CD14-positive monocyte (primary cell): ENCODE measurements at regions of chr17 and their contacts with region 1.

Region 1: DNA sequence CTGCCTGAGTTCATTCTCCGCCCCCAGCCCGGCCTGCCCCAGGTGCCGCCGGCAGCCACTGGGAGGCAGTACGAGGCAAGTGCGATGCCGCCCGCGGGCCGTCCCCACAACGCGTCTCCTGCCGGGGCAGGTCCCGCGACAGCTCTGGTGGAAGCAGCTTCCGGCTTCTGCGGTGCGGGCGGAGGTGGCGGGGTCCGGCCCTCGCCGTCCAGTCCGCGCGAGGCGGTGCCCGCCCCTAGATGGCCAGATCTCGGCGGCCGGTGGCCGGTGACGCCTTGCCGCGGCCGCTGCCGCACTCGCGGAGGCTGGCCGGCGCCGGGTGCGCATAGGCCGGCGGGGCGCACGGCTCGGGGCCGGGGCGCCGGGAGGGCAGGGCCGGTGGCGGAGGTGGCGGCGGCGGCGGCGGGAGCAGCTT is 1.8 kb downstream of the GJD3 start:
- DNase-seq: peak; percentile 70 to 75 (median 72)
- H3K4me3 ChIP-seq: peak overlapping the region; percentile 36 to 74 (median 42)
- H3K4me3 Mint-ChIP-seq: peak overlapping the region; percentile 78 to 92
- H3K27ac ChIP-seq: no peak overlapping the region
- H3K27ac Mint-ChIP-seq: peak overlapping the region in 1 of 7 donors; percentile 54
- H3K4me1 ChIP-seq: peaks cover 17 to 36% of the 10 kb centered on the region in 2 donors
- H3K4me1 Mint-ChIP-seq: peaks cover 23% of the 10 kb centered on the region
- H3K27me3 ChIP-seq: peaks cover 0 to 35% of the 10 kb centered on the region in 2 donors
- H3K27me3 Mint-ChIP-seq: peaks cover 36 to 45% (median 44%) of the 10 kb centered on the region in 3 donors
- CTCF ChIP-seq: peak; percentile 67

Region 2: GRCh38 chr17:40283662-40284061 is 79.0 kb before region 1 on chr17:
- intact Hi-C with region 1: no loop called
- DNase-seq: peak in 1 of 3 donors; percentile 16
- H3K4me3 ChIP-seq: no peak overlapping the region
- H3K4me3 Mint-ChIP-seq: no peak overlapping the region
- H3K27ac ChIP-seq: no peak overlapping the region
- H3K27ac Mint-ChIP-seq: no peak overlapping the region
- H3K4me1 ChIP-seq: peaks cover 10 to 11% of the 10 kb centered on the region in 2 donors
- H3K4me1 Mint-ChIP-seq: peaks cover 13% of the 10 kb centered on the region
- H3K27me3 ChIP-seq: no peaks in the 10 kb centered on the region
- H3K27me3 Mint-ChIP-seq: peaks cover 0 to 1% (median 0%) of the 10 kb centered on the region in 3 donors
- CTCF ChIP-seq: no peak

Region 3: GRCh38 chr17:40402668-40403067 is 40.0 kb after region 1 on chr17:
- intact Hi-C with region 1: loop called in 1 of 2 experiments (anchors 5 kb)
- DNase-seq: no peak
- H3K4me3 ChIP-seq: no peak overlapping the region
- H3K4me3 Mint-ChIP-seq: no peak overlapping the region
- H3K27ac ChIP-seq: no peak overlapping the region
- H3K27ac Mint-ChIP-seq: no peak overlapping the region
- H3K4me1 ChIP-seq: no peaks in the 10 kb centered on the region
- H3K4me1 Mint-ChIP-seq: no peaks in the 10 kb centered on the region
- H3K27me3 ChIP-seq: no peaks in the 10 kb centered on the region
- H3K27me3 Mint-ChIP-seq: no peaks in the 10 kb centered on the region
- CTCF ChIP-seq: no peak

Region 4: DNA sequence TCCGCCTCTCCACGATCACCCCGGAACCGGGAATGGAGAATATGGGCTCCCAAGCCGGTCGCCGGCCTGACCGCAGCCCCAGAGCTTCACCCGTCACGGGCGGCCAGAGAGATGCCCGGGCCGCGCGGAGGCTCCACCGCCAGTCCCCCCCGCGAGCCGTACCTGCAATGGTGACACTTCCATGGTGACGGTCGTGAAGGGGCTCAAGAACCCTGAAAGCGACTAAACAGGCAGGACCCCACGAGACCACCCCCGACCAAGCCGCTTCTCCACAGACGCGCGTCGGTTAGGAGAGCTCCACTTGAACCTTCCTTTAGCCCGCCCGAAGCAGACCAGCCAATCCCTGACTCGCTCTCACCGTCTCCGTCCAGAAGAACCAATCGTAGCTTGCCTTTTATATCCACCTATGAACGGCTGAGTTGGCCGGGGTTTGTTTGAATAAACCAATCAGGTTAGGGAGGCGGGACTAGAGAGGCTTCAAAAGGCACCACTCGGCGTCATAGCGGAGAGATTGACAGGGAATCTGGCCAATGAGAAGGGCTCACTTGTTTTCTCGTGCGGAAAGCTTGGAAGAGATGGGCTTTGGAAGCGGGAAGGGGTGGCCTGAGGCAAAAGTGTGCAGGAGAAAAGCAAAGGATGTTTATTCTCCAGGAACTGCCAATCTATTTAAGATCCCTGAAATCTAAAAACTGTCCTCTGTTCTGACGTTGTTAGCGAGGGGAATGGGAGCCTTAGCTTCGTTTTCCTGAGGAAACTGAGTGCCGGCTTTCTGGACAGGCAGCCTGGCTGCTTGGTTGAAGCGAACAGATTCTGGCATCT is 55.1 kb after region 1 on chr17 and contains the start of gene TOP2A:
- intact Hi-C with region 1: loop called (anchors 1 to 5 kb)
- DNase-seq: peak; percentile 98 to 100 (median 99)
- H3K4me3 ChIP-seq: peak within 1 kb of the TSS; percentile 60 to 92 (median 82)
- H3K4me3 Mint-ChIP-seq: peak within 1 kb of the TSS; percentile 98 to 100
- H3K27ac ChIP-seq: peak within 1 kb of the TSS in 1 of 2 donors; percentile 79
- H3K27ac Mint-ChIP-seq: peak within 1 kb of the TSS; percentile 74 to 91 (median 79)
- H3K4me1 ChIP-seq: peaks cover 39 to 47% of the 10 kb centered on the region in 2 donors
- H3K4me1 Mint-ChIP-seq: peaks cover 35% of the 10 kb centered on the region
- H3K27me3 ChIP-seq: no peaks in the 10 kb centered on the region
- H3K27me3 Mint-ChIP-seq: peaks cover 0 to 2% (median 2%) of the 10 kb centered on the region in 3 donors
- CTCF ChIP-seq: no peak
- polyA plus RNA-seq, gene TOP2A: 0.01 to 0.94 (median 0.28) TPM

Region 5: DNA sequence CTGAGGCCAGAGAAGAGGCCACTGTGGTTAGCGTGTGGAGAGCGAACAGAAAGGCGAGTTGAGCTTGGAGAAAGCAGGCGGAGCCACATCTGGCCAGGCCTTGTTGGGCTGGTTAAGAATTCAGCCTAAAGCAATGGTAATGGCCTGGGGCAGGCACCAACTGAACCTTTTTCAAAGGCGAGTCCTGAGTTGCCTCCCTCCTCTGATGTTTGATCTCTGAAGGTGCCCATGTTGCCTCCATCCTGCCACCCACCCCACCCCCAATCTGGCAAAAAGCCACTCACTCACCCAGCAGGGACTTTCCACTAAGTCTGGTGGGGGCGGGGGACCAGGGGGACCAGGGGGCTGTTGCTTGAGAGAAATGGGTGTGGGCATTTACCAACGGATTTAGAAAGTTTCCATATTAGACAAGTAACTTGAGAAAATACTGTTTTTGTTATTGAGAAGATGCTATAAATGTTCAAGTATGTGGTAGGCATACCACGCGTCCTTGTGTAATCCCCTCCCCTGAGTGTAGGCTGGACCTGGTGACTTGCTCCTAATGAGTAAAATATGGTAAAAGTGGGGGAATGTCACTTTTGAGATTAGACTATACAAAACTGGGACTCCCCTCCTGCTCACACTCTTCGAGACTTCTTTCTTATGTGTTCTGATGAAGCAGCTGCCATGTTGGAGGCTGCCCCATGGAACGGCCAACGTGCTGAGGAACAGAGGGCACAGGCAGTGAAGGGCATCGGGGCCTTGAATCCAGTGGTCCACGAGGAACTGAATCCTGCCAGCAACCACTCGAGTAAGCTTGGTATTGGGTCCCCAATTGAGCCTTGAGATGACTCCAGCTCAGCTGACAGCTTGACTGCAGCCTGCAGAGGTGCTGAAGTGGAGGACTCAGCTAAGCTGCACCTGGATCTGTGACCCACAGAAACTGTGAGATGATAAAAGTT is 168.6 kb after region 1 on chr17:
- intact Hi-C with region 1: loop called (anchors 5 kb)
- DNase-seq: no peak
- H3K4me3 ChIP-seq: no peak overlapping the region
- H3K4me3 Mint-ChIP-seq: no peak overlapping the region
- H3K27ac ChIP-seq: no peak overlapping the region
- H3K27ac Mint-ChIP-seq: no peak overlapping the region
- H3K4me1 ChIP-seq: peaks cover 0 to 8% of the 10 kb centered on the region in 2 donors
- H3K4me1 Mint-ChIP-seq: peaks cover 15% of the 10 kb centered on the region
- H3K27me3 ChIP-seq: peaks cover 3 to 4% of the 10 kb centered on the region in 2 donors
- H3K27me3 Mint-ChIP-seq: peaks cover 10 to 33% (median 24%) of the 10 kb centered on the region in 3 donors
- CTCF ChIP-seq: no peak